CD4-positive, alpha-beta T cell (primary cell): ENCODE measurements at regions of chr10 and their contacts with region 1.

Region 1: DNA sequence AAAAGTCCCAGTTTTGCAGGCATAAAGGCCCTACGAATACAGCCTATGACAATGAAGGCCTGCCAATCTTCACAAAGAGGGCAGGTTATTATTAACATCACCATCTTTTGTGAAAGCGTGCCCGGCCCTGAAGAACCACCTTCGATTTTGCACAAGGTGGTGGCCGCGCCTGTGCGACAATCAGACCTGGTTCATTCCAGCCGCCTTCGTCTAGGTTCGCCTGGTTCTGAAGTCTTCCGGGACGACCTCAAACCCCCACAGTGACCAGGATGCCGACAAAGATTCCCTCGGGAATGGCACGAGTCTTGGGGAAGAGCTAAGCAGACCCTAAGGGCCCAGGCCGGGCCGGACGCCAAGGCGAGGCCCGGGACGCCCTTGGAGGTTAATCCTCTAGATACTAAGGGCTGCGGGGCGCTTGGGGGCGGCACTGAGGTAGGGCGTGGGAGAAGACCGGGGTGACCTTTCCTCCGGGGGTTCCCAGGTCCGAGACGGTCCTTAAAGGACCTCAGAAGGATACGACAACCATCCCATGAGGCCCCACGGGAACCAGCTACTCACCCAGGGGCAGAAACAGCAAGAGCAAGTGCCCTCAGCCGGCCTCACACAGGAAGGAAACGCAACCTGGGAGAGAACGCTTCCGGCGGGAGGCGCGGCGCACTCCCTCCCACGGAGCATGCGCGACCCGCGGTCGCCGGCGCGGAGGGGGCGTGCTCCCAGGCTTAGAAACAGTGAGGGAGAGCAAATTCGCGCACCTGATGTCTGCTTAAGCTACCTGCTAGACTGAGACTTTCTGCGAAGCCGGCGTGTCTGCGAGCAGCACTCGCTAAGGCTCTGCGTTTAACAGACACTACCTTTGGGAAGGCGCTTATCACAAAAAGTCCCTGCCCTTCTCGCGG is at the start of gene ATAD1:
- DNase-seq: peak; percentile 78 to 95 (median 86)
- ATAC-seq: peak; percentile 79
- H3K4me3 ChIP-seq: peak within 1 kb of the TSS; percentile 93
- H3K4me3 Mint-ChIP-seq: peak within 1 kb of the TSS; percentile 92
- H3K27ac ChIP-seq: peak within 1 kb of the TSS; percentile 93 to 98
- H3K27ac Mint-ChIP-seq: peak within 1 kb of the TSS; percentile 99
- H3K4me1 ChIP-seq: peaks cover 19% of the 10 kb centered on the region
- H3K4me1 Mint-ChIP-seq: peaks cover 47% of the 10 kb centered on the region
- H3K27me3 ChIP-seq: no peaks in the 10 kb centered on the region
- H3K27me3 Mint-ChIP-seq: no peaks in the 10 kb centered on the region
- CTCF ChIP-seq: peak; percentile 5
- total RNA-seq, gene ATAD1: 33.7 to 38.7 TPM

Region 2: GRCh38 chr10:87829986-87830729 is 12.3 kb after region 1 on chr10:
- CTCF ChIA-PET with region 1: interaction called, 3 read pairs
- POLR2A ChIA-PET with region 1: interaction called, 12 read pairs
- intact Hi-C with region 1: no loop called
- DNase-seq: no peak
- ATAC-seq: no peak
- H3K4me3 ChIP-seq: no peak overlapping the region
- H3K4me3 Mint-ChIP-seq: no peak overlapping the region
- H3K27ac ChIP-seq: no peak overlapping the region
- H3K27ac Mint-ChIP-seq: no peak overlapping the region
- H3K4me1 ChIP-seq: no peaks in the 10 kb centered on the region
- H3K4me1 Mint-ChIP-seq: peaks cover 22% of the 10 kb centered on the region
- H3K27me3 ChIP-seq: no peaks in the 10 kb centered on the region
- H3K27me3 Mint-ChIP-seq: no peaks in the 10 kb centered on the region
- CTCF ChIP-seq: no peak

Region 3: GRCh38 chr10:88152720-88153119 is 334.9 kb after region 1 on chr10:
- CTCF ChIA-PET with region 1: no interaction called
- POLR2A ChIA-PET with region 1: no interaction called
- intact Hi-C with region 1: no loop called
- DNase-seq: peak in 7 of 14 experiments; percentile 4 to 59 (median 24)
- ATAC-seq: peak; percentile 85
- H3K4me3 ChIP-seq: no peak overlapping the region
- H3K4me3 Mint-ChIP-seq: no peak overlapping the region
- H3K27ac ChIP-seq: no peak overlapping the region
- H3K27ac Mint-ChIP-seq: no peak overlapping the region
- H3K4me1 ChIP-seq: peaks cover 8% of the 10 kb centered on the region
- H3K4me1 Mint-ChIP-seq: peaks cover 14% of the 10 kb centered on the region
- H3K27me3 ChIP-seq: no peaks in the 10 kb centered on the region
- H3K27me3 Mint-ChIP-seq: no peaks in the 10 kb centered on the region
- CTCF ChIP-seq: no peak

Region 4: GRCh38 chr10:88582806-88583583 is 765.1 kb after region 1 on chr10 and contains the start of gene RNLS:
- CTCF ChIA-PET with region 1: no interaction called
- POLR2A ChIA-PET with region 1: interaction called, 20 read pairs
- intact Hi-C with region 1: no loop called
- DNase-seq: peak; percentile 39 to 85 (median 63)
- ATAC-seq: peak; percentile 82
- H3K4me3 ChIP-seq: peak within 1 kb of the TSS; percentile 83
- H3K4me3 Mint-ChIP-seq: peak within 1 kb of the TSS; percentile 92
- H3K27ac ChIP-seq: peak within 1 kb of the TSS; percentile 77 to 87
- H3K27ac Mint-ChIP-seq: peak within 1 kb of the TSS; percentile 54
- H3K4me1 ChIP-seq: peaks cover 7% of the 10 kb centered on the region
- H3K4me1 Mint-ChIP-seq: peaks cover 14% of the 10 kb centered on the region
- H3K27me3 ChIP-seq: no peaks in the 10 kb centered on the region
- H3K27me3 Mint-ChIP-seq: peaks cover 6% of the 10 kb centered on the region
- CTCF ChIP-seq: peak; percentile 86
- total RNA-seq, gene RNLS: 0.95 to 2.7 TPM